Activated T-helper 1 cell treated with anti-CD3 and anti-CD28 coated beads, Interleukin-12 subunit alpha, Interleukin-12 subunit beta, Interleukin-2, Interleukin-4 antibody, amounts not matched to agents 30 ng/mL and 10 ng/mL and 1 ng/mL, durations not matched to agents 14 hours and 24 hours and 36 hours (primary cell): ENCODE measurements at regions of chr17 and their contacts with region 1.

Region 1: GRCh38 chr17:37844158-37844976 is 79.8 kb upstream of the TBC1D3K start:
- DNase-seq: peak; percentile 51
- H3K4me3 Mint-ChIP-seq: no peak overlapping the region
- H3K27ac Mint-ChIP-seq: no peak overlapping the region
- H3K4me1 Mint-ChIP-seq: peaks cover 49% of the 10 kb centered on the region
- H3K27me3 Mint-ChIP-seq: peaks cover 9% of the 10 kb centered on the region

Region 2: DNA sequence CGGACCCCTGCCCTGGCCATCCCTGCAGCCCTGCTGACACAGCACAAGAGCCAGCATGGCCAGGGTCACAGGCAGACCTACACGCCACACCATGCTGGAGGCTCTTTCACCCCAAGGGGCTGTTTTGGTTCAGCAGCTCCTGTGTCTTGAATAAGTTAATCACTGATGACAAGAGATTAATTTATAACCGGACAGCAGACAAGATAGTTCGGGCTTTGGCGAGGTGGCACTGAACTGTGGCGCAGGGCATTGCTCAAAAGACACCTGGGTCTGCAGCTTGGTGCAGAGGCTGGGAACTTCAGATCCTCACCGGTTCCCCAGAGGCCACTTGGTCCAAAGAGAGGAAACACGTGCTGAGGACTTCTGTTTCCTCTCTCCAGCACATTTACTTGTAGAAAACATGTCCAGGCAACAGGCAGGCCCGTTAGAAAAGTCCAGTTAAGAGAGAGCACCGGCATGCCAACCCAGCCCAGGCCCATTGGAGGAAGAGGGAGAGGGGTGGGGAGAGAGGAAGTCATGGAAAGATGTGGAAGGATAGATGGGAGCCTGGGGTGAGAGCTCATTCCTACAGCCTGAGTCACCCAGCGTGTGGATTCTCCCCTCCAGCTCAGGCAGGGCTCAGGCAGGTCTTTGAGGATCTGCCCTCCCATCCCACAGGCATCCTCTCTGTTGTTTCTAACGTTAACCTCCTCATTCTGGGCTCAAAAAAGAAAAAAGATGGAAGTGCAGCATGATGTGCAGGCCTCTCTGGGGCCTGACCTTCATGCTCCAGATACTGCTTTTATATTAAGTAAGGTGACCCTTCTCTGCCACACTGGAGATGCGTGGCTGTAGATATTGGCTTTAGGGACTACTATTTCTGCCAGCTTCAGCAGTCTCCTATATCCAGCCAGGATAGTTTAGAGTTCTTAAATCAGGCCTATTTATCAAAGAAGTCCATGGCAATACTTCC is 19.6 kb before region 1 on chr17:
- intact Hi-C with region 1: loop called (anchors 1 kb)
- DNase-seq: no peak
- H3K4me3 Mint-ChIP-seq: no peak overlapping the region
- H3K27ac Mint-ChIP-seq: no peak overlapping the region
- H3K4me1 Mint-ChIP-seq: peaks cover 30% of the 10 kb centered on the region
- H3K27me3 Mint-ChIP-seq: peaks cover 2% of the 10 kb centered on the region

Region 3: DNA sequence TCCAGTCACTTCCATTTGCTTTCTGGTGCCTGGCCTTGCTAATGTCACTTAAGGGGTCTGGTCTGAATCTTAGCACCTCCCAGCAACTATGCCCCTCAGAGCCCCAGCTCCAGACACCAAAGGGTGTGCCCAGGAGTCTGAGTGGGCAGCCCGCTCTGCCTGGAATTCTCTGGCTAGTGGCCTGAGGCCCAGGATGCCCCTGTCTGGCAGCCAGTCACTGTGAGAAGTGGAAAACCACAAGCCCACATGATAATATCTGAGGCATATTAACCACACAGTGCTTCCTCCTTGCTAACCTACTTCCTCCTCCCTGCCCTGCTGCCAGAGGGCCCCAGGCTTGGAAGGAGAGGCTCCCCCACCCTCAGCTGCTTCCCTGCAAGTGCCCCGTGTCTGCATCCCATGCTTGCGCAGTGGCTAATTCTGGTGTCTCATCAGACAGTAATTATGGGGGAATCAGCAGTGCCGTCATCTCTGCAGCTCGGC is 747.4 kb after region 1 on chr17:
- intact Hi-C with region 1: no loop called
- DNase-seq: peak; percentile 7
- H3K4me3 Mint-ChIP-seq: no peak overlapping the region
- H3K27ac Mint-ChIP-seq: no peak overlapping the region
- H3K4me1 Mint-ChIP-seq: peaks cover 25% of the 10 kb centered on the region
- H3K27me3 Mint-ChIP-seq: peaks cover 60% of the 10 kb centered on the region